ENCODE measurements at regions of chr10 and their contacts with region 1.

Region 1: GRCh38 chr10:59981779-59982178 is 75.4 kb upstream of the CCDC6 start:
- DNase-seq: no peak
- H3K4me3 ChIP-seq: no peak overlapping the region
- H3K4me3 Mint-ChIP-seq: no peak overlapping the region
- H3K27ac ChIP-seq: no peak overlapping the region
- H3K27ac Mint-ChIP-seq: no peak overlapping the region
- H3K4me1 ChIP-seq: no peaks in the 10 kb centered on the region
- H3K4me1 Mint-ChIP-seq: no peaks in the 10 kb centered on the region
- H3K27me3 ChIP-seq: no peaks in the 10 kb centered on the region
- H3K27me3 Mint-ChIP-seq: peaks cover 10% of the 10 kb centered on the region in 2 donors

Region 2: GRCh38 chr10:59872892-59873463 is 108.8 kb before region 1 on chr10:
- CTCF ChIA-PET with region 1: no interaction called
- POLR2A ChIA-PET with region 1: interaction called, 10 read pairs
- DNase-seq: no peak
- H3K4me3 ChIP-seq: no peak overlapping the region
- H3K4me3 Mint-ChIP-seq: peak overlapping the region in 2 of 7 donors; percentile 58 to 63
- H3K27ac ChIP-seq: no peak overlapping the region
- H3K27ac Mint-ChIP-seq: peak overlapping the region in 1 of 8 donors; percentile 72
- H3K4me1 ChIP-seq: peaks cover 26% of the 10 kb centered on the region
- H3K4me1 Mint-ChIP-seq: peaks cover 65 to 85% (median 77%) of the 10 kb centered on the region in 3 donors
- H3K27me3 ChIP-seq: no peaks in the 10 kb centered on the region
- H3K27me3 Mint-ChIP-seq: no peaks in the 10 kb centered on the region